ENCODE measurements at regions of chr10 and their contacts with region 1.

Region 1: DNA sequence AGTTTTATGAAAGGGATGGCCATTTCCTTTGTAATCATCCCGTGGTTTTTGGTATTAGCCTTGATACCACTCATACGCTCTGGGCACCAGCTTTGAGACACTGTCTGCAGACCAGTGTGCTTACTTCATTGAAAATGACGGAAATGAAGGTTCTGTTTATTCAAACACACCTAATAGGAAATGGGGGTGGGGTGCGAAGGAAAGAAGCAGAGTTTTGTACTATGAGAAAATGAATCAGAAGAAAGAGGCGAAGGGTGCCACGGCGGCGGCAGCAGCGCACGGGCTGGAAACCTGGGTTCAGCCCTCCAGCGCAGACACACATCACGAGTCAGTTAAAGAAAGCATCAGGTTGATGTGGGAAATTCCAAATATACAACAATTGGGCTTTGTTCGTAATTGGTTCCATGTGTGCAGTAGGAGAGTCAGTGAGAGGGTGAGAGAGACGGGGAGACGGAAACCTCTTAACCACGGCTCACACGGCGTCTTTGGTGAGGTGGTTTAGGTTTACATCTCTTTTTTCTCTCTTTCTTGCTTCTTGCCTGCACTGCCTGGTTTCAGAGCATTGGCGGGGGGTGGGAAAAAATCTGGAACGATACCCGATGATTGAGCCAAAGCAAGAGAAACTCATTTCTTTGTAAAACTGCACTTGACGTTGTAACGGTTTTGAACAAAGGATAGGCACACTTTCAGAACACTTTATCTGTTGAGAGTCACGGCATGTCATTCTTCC is 321.2 kb downstream of the FRMD4A start:
- DNase-seq: no peak
- H3K4me3 ChIP-seq: peak overlapping the region in 56 of 59 donors; percentile 2 to 64 (median 38)
- H3K27ac ChIP-seq: peak overlapping the region in 43 of 59 donors; percentile 1 to 77 (median 51)
- H3K27me3 ChIP-seq: peaks cover 0 to 57% (median 0%) of the 10 kb centered on the region in 45 donors
- CTCF ChIP-seq: no peak

Region 2: DNA sequence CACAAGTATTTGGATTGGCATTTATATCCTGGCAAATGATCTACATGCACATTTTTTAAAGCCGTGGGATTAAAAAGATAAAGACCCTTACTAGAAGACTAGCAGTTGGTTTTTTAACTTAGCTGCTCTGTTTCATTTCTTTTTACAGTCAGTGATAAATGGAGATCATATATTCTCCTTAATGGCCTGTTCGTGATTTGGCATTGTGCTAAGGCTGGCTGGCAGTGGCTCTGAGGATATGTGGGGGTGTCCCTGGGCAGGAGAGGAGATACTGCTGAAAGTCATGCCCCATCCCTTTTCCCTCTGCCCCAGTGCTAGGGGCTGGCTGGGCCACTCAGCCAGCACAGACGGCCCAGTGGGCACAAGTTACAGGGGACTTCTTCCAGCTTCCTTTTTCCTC is 81.1 kb before region 1 on chr10:
- intact Hi-C with region 1: loop called in 1 of 2 experiments (anchors 5 kb)
- DNase-seq: no peak
- H3K4me3 ChIP-seq: no peak overlapping the region
- H3K27ac ChIP-seq: no peak overlapping the region
- H3K27me3 ChIP-seq: no peaks in the 10 kb centered on the region
- CTCF ChIP-seq: no peak